Activated B cell treated with CpG ODN at 0.5 μM for 24 hours (primary cell): ENCODE measurements at regions of chr2 and their contacts with region 1.

Region 1: DNA sequence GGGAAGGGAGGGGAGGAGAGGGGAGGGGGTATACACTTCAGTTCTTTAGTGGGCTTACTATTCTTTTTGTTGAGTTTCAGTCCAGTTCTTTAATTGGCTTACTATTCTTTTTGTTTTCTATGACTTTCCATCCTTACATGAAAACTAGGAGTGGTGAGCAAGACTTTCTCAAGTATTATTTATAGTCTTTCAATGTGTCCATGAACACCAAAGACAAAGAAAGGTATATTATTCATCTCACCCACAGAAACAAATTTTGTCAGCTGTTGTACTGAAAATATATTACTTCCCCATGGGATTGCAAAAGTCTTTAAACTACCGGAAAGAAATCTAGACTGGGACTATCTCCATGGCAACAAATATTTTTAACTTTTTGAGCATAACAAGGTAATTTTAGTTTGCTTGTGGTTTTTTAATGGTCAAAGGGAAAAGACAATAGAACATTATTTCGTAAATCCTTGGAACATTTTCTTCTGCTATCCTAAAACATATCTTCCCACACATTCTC is 17.6 kb downstream of the ADAM17 start:
- DNase-seq: no peak
- ATAC-seq: no peak
- H3K4me3 Mint-ChIP-seq: peak overlapping the region; percentile 50
- H3K27ac Mint-ChIP-seq: peak overlapping the region; percentile 78
- H3K4me1 Mint-ChIP-seq: peaks cover 75% of the 10 kb centered on the region
- H3K27me3 Mint-ChIP-seq: no peaks in the 10 kb centered on the region
- CTCF ChIP-seq: no peak

Region 2: GRCh38 chr2:8750221-8750620 is 787.8 kb before region 1 on chr2:
- CTCF ChIA-PET with region 1: no interaction called
- POLR2A ChIA-PET with region 1: no interaction called
- intact Hi-C with region 1: no loop called
- DNase-seq: no peak
- ATAC-seq: no peak
- H3K4me3 Mint-ChIP-seq: no peak overlapping the region
- H3K27ac Mint-ChIP-seq: no peak overlapping the region
- H3K4me1 Mint-ChIP-seq: no peaks in the 10 kb centered on the region
- H3K27me3 Mint-ChIP-seq: no peaks in the 10 kb centered on the region
- CTCF ChIP-seq: no peak

Region 3: GRCh38 chr2:9415516-9416169 is 122.4 kb before region 1 on chr2:
- CTCF ChIA-PET with region 1: no interaction called
- POLR2A ChIA-PET with region 1: no interaction called
- intact Hi-C with region 1: no loop called
- DNase-seq: no peak
- ATAC-seq: no peak
- H3K4me3 Mint-ChIP-seq: no peak overlapping the region
- H3K27ac Mint-ChIP-seq: no peak overlapping the region
- H3K4me1 Mint-ChIP-seq: peaks cover 9% of the 10 kb centered on the region
- H3K27me3 Mint-ChIP-seq: no peaks in the 10 kb centered on the region
- CTCF ChIP-seq: no peak

Region 4: DNA sequence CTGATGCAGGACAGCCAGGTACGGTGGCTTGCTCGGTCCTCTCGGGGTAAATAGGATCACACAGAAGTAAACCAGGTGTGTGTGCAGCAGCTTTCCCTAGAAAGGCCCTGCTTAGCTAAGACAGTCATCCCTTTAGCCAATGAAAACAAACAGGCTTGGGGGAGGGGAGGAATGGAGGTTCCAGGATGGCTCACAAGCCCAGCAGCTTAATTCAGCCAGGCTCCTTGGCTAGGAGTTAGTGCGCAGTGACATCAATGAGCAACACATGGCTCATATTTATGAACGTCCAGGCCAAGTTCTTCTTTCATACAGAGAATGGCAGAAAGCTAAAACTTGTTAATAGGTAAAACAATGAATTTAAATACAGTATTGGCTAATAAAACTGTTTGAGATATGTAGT is 53.5 kb before region 1 on chr2:
- CTCF ChIA-PET with region 1: no interaction called
- POLR2A ChIA-PET with region 1: no interaction called
- intact Hi-C with region 1: loop called (anchors 5 kb)
- DNase-seq: no peak
- ATAC-seq: no peak
- H3K4me3 Mint-ChIP-seq: no peak overlapping the region
- H3K27ac Mint-ChIP-seq: no peak overlapping the region
- H3K4me1 Mint-ChIP-seq: peaks cover 5% of the 10 kb centered on the region
- H3K27me3 Mint-ChIP-seq: no peaks in the 10 kb centered on the region
- CTCF ChIP-seq: no peak

Region 5: GRCh38 chr2:9548506-9548905 is 10.5 kb after region 1 on chr2:
- CTCF ChIA-PET with region 1: interaction called, 3 read pairs
- POLR2A ChIA-PET with region 1: interaction called, 21 read pairs
- intact Hi-C with region 1: loop called (anchors 1 kb)
- DNase-seq: no peak
- ATAC-seq: peak; percentile 56
- H3K4me3 Mint-ChIP-seq: peak overlapping the region; percentile 86
- H3K27ac Mint-ChIP-seq: peak overlapping the region; percentile 96
- H3K4me1 Mint-ChIP-seq: peaks cover 85% of the 10 kb centered on the region
- H3K27me3 Mint-ChIP-seq: no peaks in the 10 kb centered on the region
- CTCF ChIP-seq: no peak